GM18951 (cell line): ENCODE measurements at regions of chr6 and their contacts with region 1.

Region 1: GRCh38 chr6:56862415-56863175 is 92.3 kb upstream of the BEND6 start:
- POLR2A ChIP-seq: no peak

Region 2: GRCh38 chr6:56359201-56359899 is 503.2 kb before region 1 on chr6:
- in situ Hi-C with region 1: loop called (anchors 10 kb)
- POLR2A ChIP-seq: no peak

Region 3: GRCh38 chr6:56637640-56638039 is 225.0 kb before region 1 on chr6:
- in situ Hi-C with region 1: loop called (anchors 10 kb)
- POLR2A ChIP-seq: no peak

Region 4: GRCh38 chr6:56683882-56684281 is 178.7 kb before region 1 on chr6:
- in situ Hi-C with region 1: no loop called
- POLR2A ChIP-seq: no peak